ENCODE measurements at regions of chr11 and their contacts with region 1.

Region 1: GRCh38 chr11:44766112-44766971 is 39.6 kb downstream of the TSPAN18 start:
- DNase-seq: peak; percentile 94
- H3K4me3 ChIP-seq: no peak overlapping the region
- H3K27ac ChIP-seq: peak overlapping the region; percentile 28
- H3K4me1 ChIP-seq: peaks cover 53% of the 10 kb centered on the region
- H3K27me3 ChIP-seq: no peaks in the 10 kb centered on the region
- CTCF ChIP-seq: no peak

Region 2: GRCh38 chr11:44799012-44799411 is 32.7 kb after region 1 on chr11:
- CTCF ChIA-PET with region 1: no interaction called
- POLR2A ChIA-PET with region 1: interaction called, 12 read pairs
- intact Hi-C with region 1: no loop called
- DNase-seq: no peak
- H3K4me3 ChIP-seq: no peak overlapping the region
- H3K27ac ChIP-seq: no peak overlapping the region
- H3K4me1 ChIP-seq: peaks cover 23% of the 10 kb centered on the region
- H3K27me3 ChIP-seq: no peaks in the 10 kb centered on the region
- CTCF ChIP-seq: no peak

Region 3: DNA sequence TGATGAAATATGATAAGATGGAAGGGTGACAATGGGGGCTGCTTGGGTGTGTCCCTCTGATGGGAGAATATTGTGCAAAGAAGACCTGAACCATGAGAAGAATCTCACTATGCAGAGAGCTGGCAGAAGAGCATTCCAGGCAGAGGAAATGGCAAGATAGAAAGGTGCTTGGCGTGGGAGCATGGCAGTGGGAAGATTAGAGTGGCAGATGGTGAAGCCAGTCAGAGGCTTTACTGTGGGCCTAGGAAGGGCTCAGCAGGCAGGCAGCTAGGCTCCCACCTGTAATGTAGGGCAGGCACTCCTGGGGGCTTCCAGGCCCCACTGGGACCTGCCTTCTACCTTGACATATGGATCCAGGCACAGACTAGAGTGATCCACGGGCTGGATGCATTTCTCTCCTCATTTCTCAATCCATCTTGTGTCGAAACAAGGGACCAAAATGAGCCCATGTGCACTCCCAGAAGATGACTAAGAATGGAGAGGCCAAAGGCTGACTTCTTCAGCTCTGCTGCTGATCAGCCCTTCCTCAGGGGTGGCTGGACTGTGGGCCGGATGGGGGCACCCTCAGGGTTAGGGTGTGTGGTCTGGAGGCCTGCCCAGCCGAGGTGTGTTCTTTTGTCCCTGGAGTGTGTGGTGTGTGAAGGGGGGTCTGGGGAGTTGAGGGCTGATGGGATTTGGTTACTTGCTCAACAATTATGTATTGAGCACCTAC is 48.7 kb after region 1 on chr11:
- CTCF ChIA-PET with region 1: no interaction called
- POLR2A ChIA-PET with region 1: no interaction called
- intact Hi-C with region 1: no loop called
- DNase-seq: no peak
- H3K4me3 ChIP-seq: no peak overlapping the region
- H3K27ac ChIP-seq: no peak overlapping the region
- H3K4me1 ChIP-seq: no peaks in the 10 kb centered on the region
- H3K27me3 ChIP-seq: no peaks in the 10 kb centered on the region
- CTCF ChIP-seq: no peak

Region 4: DNA sequence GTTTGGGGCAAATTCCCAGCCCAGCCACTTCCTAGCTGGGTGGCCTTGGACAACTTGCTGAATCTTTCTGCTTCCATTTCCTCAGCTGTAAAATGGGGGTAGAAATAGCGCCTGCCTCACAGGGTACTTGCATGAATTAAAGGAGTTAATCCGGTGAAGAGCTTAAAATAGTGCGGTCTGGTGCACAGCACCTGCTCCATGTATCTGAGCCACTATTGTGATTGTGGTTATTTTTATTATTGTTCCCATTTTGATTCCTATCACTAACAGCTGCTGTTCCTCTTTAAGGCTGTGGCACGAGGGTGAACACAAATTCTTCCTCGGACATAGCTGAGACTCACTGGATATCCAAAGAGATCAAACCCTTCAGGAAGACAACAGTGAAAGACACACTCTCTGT is 231.2 kb after region 1 on chr11:
- CTCF ChIA-PET with region 1: no interaction called
- POLR2A ChIA-PET with region 1: no interaction called
- intact Hi-C with region 1: no loop called
- DNase-seq: no peak
- H3K4me3 ChIP-seq: no peak overlapping the region
- H3K27ac ChIP-seq: no peak overlapping the region
- H3K4me1 ChIP-seq: no peaks in the 10 kb centered on the region
- H3K27me3 ChIP-seq: peaks cover 12% of the 10 kb centered on the region
- CTCF ChIP-seq: no peak